ENCODE measurements at regions of chr11 and their contacts with region 1.

Region 1: DNA sequence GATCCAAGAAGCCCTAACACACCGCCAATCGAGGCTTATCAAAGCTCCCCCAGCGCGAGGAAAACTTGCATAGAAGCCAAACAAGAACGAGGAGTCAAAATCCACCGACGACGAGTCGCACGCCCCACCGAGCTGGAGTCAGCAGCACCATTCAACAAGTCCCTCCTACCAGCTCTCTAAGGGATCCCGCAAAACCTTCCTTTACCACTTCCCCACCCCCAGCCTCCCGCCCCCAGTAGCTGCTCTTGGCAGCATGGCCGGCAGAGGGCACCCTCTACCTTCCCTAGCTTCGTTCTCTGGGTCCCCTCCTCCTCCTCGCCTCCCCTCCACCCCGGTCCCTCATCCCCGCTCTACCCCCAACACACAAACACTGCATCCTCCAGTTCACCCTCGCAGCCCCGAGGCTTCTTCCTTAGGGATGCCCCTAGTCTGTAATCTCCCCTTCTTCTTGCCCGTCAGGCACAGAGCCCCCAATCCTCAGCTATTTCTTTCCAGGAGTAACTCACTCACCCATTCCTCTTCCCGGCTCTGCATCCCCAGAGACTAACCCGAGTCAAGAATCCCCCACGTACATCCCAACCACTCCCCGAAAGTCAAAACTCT is 1.3 kb downstream of the BDNF start:
- DNase-seq: no peak
- H3K4me3 ChIP-seq: peak overlapping the region; percentile 51 to 63
- H3K27ac ChIP-seq: peak overlapping the region; percentile 69
- H3K4me1 ChIP-seq: peaks cover 29% of the 10 kb centered on the region
- H3K27me3 ChIP-seq: no peaks in the 10 kb centered on the region
- CTCF ChIP-seq: peak in 2 of 3 experiments; percentile 16 to 86
- POLR2A ChIP-seq: no peak

Region 2: DNA sequence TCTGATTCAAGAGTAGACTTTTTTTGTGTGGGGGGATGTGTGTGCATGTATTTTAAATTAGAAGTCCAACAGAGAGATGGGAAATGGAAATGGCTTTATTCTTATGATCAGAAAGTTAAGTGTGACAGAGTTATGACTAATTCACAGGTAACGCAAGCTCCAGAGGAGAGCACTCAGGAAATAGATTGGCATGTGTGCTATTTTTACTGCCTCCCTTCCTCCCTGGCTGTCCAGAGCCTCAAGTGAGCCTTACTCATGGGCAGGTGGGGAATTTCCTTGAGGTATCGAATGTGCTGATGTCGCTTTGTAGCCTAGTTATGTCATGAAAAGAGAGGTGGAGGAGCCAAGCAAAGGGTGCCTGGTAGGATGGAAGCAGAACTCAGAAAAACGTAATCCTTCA is 71.6 kb after region 1 on chr11:
- intact Hi-C with region 1: no loop called
- DNase-seq: no peak
- H3K4me3 ChIP-seq: no peak overlapping the region
- H3K27ac ChIP-seq: no peak overlapping the region
- H3K4me1 ChIP-seq: no peaks in the 10 kb centered on the region
- H3K27me3 ChIP-seq: no peaks in the 10 kb centered on the region
- CTCF ChIP-seq: no peak
- POLR2A ChIP-seq: no peak

Region 3: GRCh38 chr11:28529540-28530410 is 830.8 kb after region 1 on chr11:
- intact Hi-C with region 1: loop called (anchors 10 kb)
- DNase-seq: no peak
- H3K4me3 ChIP-seq: no peak overlapping the region
- H3K27ac ChIP-seq: no peak overlapping the region
- H3K4me1 ChIP-seq: no peaks in the 10 kb centered on the region
- H3K27me3 ChIP-seq: no peaks in the 10 kb centered on the region
- CTCF ChIP-seq: no peak
- POLR2A ChIP-seq: no peak

Measured in vagina (tissue), 2 donors.